ENCODE measurements at regions of chr1 and their contacts with region 1.

Region 1: GRCh38 chr1:31789259-31790065 is 25.3 kb upstream of the ADGRB2 start:
- DNase-seq: peak; percentile 99
- ATAC-seq: peak; percentile 74
- H3K4me3 Mint-ChIP-seq: peak overlapping the region; percentile 88
- H3K27ac Mint-ChIP-seq: peak overlapping the region; percentile 98
- H3K4me1 Mint-ChIP-seq: peaks cover 40% of the 10 kb centered on the region
- H3K27me3 Mint-ChIP-seq: peaks cover 4% of the 10 kb centered on the region
- CTCF ChIP-seq: no peak

Region 2: DNA sequence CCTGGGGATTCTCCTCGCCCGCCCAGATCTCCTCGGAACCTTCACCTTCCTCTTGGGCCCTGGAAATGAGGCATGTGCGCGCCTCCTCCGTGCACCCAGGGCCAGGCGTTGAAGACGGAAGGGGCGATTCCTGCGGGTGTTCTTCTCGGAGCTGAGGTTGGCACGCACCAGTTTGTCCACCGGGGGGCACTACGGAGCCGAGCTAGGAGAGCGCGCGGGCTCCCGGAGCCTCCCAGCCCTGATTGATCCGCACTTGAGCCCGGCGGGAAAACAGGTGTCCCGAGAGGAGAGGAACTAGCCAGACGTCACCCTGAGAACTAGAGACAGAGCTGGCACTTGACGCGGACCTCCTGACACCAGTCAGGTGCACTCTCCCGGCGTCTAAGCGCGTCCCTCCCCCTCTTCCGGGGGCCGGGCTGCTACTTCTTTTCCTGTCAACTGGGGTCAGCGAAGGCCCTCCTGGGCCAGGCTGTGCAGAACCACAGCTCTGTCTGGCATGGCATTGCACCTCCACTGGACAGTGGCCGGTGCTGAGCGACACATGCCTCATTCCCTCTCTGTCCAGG is 394.8 kb before region 1 on chr1:
- CTCF ChIA-PET with region 1: interaction called, 9 read pairs
- POLR2A ChIA-PET with region 1: no interaction called
- intact Hi-C with region 1: loop called (anchors 1 kb)
- DNase-seq: peak; percentile 72
- ATAC-seq: peak; percentile 98
- H3K4me3 Mint-ChIP-seq: peak overlapping the region; percentile 85
- H3K27ac Mint-ChIP-seq: no peak overlapping the region
- H3K4me1 Mint-ChIP-seq: peaks cover 14% of the 10 kb centered on the region
- H3K27me3 Mint-ChIP-seq: no peaks in the 10 kb centered on the region
- CTCF ChIP-seq: no peak

Region 3: DNA sequence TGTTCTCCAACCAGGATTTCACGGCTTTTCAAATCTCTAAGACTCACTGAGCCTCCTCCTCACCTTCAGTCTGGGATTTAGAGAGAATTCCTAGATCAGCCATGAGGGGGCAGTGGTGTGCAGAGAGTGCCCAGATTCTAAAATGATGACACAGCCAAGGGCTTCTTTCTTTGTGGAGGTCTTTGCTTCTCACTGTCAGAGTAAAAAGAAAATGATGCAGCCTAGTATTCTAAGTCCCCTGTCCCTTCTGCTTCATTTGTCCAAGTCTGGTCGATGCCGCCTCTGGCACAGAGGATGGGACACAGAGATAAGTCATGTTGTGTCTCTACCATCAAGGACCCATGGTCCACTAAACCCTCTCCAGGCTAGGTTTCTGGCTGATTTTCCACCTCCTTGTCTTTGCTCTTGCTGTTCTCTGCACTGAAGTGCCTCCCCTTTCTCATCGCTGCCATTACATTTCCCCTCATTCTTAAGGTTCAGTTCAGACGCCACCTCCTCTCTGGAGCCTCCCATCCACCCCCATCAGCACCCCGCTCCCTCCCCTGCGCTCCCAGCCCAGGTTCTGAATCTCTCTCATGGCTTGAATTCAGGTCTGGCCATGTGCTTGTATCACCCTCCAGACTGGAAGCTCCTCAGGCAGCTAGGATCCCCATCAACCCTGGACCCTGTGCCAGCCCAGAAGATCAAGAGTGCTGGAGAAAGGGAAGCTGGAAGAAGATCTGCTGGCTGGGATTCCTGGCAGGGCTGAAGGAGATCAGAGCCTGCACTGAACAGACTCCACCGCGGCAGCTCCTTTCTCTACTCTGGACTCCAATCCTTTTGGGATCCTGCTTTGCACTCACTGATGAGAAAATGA is 225.1 kb before region 1 on chr1:
- CTCF ChIA-PET with region 1: interaction called, 23 read pairs
- POLR2A ChIA-PET with region 1: interaction called, 3 read pairs
- intact Hi-C with region 1: no loop called
- DNase-seq: no peak
- ATAC-seq: peak; percentile 84
- H3K4me3 Mint-ChIP-seq: no peak overlapping the region
- H3K27ac Mint-ChIP-seq: no peak overlapping the region
- H3K4me1 Mint-ChIP-seq: no peaks in the 10 kb centered on the region
- H3K27me3 Mint-ChIP-seq: peaks cover 32% of the 10 kb centered on the region
- CTCF ChIP-seq: peak; percentile 22

Region 4: DNA sequence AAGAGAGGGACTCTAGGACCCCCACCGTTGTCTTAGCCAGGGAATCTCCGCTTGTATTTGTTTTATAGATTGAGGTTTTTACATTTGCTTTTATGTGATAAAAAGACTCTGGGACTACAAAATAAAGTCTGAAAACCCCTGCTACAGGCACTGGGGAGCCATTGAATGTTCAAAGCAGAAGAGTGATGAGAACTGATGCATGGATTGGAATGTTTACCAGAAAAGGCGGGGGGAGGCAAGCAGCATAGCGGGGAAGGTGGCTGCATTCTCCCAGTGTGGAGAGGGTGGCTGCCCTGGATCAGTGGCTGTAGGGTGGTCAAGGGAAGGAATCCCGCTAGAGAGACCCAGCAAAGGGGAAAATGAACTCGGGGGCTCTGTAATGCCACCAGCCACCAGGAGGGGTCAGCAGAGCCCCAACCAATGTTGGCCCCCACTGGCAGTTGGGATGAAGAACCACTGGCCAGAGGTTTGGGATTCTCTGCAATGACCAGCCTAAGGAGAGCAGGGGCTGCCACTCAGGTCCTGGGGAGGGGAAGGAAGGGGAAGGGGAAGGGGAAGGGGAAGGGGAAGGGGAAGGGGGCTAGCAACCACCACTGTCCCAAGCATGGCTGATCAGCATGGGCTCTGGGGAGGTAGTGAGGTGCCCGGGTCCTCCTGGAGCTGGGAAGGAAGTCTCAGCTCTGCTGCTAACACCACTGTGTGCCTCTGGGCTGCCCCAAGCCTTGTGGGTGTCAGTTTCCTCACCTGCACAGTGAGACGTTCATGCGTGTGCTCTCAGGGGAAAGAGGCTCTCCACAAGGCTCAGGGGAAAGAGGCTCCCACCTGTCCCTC is 125.6 kb before region 1 on chr1:
- CTCF ChIA-PET with region 1: interaction called, 114 read pairs
- POLR2A ChIA-PET with region 1: interaction called, 16 read pairs
- intact Hi-C with region 1: loop called (anchors 1 kb)
- DNase-seq: peak; percentile 63
- ATAC-seq: peak; percentile 81
- H3K4me3 Mint-ChIP-seq: no peak overlapping the region
- H3K27ac Mint-ChIP-seq: peak overlapping the region; percentile 46
- H3K4me1 Mint-ChIP-seq: no peaks in the 10 kb centered on the region
- H3K27me3 Mint-ChIP-seq: peaks cover 9% of the 10 kb centered on the region
- CTCF ChIP-seq: peak; percentile 31

Region 5: DNA sequence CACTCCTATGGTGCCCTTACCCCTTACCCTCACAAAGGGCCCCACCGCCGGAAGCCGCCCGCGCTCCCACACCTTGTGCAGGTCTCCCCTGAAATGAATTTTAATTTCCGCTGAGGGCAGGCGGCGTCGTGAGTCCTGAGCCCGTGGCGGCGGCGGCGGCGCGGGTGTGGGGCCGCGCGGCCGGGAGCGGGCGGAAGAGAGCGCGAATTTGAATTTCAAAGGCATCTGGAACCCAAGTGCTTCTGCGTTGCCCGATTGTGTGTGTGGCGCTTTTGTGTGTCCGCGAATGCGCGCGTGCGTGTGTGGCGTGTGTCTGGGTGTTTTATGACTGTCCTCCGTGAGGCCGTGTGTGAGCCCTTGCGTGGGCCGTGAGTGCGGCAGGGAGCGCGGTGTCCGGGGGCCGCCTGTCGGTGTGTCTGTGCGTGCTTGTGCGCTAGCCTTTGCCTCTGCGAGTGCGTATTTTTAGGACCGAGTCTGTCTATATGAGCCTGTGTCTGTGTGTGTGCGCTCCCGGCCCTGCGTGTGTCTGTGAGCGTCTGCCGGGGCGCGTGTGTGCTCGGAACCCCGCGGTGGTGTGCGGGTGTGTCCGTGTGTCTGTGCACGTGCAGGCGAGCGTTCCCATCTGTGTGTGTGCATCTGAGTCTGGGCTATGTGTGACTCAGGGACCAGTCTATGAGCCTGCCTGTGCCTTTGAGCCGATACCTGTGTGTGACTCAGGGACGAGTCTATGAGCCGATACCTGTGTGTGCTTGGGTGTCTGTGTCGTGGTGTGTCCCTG is 17.4 kb before region 1 on chr1:
- CTCF ChIA-PET with region 1: interaction called, 7 read pairs
- POLR2A ChIA-PET with region 1: interaction called, 13 read pairs
- intact Hi-C with region 1: loop called (anchors 1 kb)
- DNase-seq: no peak
- ATAC-seq: peak; percentile 55
- H3K4me3 Mint-ChIP-seq: peak overlapping the region; percentile 78
- H3K27ac Mint-ChIP-seq: peak overlapping the region; percentile 73
- H3K4me1 Mint-ChIP-seq: peaks cover 39% of the 10 kb centered on the region
- H3K27me3 Mint-ChIP-seq: peaks cover 40% of the 10 kb centered on the region
- CTCF ChIP-seq: no peak

Region 6: GRCh38 chr1:31814041-31814511 is 24.6 kb after region 1 on chr1:
- CTCF ChIA-PET with region 1: no interaction called
- POLR2A ChIA-PET with region 1: no interaction called
- intact Hi-C with region 1: no loop called
- DNase-seq: no peak
- ATAC-seq: no peak
- H3K4me3 Mint-ChIP-seq: no peak overlapping the region
- H3K27ac Mint-ChIP-seq: no peak overlapping the region
- H3K4me1 Mint-ChIP-seq: peaks cover 26% of the 10 kb centered on the region
- H3K27me3 Mint-ChIP-seq: peaks cover 3% of the 10 kb centered on the region
- CTCF ChIP-seq: no peak

Region 7: DNA sequence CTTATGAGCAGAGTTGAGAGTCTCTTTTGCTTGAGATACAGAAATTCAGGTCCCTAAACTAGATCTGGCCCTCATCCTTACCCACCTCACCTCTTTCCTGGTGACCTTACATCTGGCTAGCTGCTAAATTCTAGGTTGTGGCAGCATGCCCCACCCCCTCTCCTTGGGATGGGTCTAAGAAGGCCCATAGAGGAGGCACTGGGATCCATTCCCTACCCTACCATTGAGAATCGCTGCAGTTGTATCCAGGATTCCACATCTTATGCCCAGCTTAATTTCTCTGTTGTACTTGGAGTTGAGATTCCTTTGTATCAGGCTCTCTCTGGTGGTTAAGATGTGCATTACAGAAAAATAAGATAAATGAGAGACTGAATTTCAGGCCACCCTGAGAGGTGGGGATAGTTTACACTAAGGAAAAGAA is 273.8 kb after region 1 on chr1:
- CTCF ChIA-PET with region 1: interaction called, 8 read pairs
- POLR2A ChIA-PET with region 1: no interaction called
- intact Hi-C with region 1: loop called (anchors 1 kb)
- DNase-seq: no peak
- ATAC-seq: peak; percentile 75
- H3K4me3 Mint-ChIP-seq: no peak overlapping the region
- H3K27ac Mint-ChIP-seq: no peak overlapping the region
- H3K4me1 Mint-ChIP-seq: peaks cover 9% of the 10 kb centered on the region
- H3K27me3 Mint-ChIP-seq: no peaks in the 10 kb centered on the region
- CTCF ChIP-seq: no peak

Region 8: DNA sequence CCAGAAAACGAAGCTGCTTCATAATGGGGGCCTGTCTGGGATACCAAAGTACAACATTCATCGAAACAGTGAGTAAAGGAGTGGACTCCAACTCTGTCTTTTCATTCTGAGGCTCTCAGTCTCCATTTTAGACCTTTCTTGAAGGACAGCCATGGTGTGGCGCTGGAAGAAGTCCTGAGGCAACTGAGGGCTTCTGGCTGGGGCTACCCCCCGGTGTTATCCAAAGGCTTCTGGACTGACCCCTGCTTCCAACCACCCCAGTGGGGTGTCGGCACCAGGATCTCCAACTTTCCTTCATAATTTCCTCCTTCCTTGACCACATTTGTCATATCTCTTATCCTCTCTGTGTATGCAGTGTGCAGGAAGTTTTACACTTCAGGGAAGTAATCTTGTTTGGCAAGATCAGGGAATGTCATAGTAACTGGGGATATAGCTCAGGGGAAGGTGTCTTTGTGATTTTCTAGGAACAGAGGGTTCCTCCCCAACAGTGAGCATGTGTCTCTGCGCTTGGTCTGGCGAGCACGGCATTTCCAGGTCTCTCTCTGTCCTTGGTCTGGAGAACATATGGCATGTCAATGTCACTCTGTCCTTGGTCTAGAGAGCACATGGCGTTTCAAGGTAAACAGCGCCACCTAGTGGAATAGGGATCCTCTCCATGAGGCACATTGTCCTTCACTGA is 624.2 kb after region 1 on chr1:
- CTCF ChIA-PET with region 1: no interaction called
- POLR2A ChIA-PET with region 1: no interaction called
- intact Hi-C with region 1: loop called (anchors 1 kb)
- DNase-seq: peak; percentile 28
- ATAC-seq: peak; percentile 88
- H3K4me3 Mint-ChIP-seq: no peak overlapping the region
- H3K27ac Mint-ChIP-seq: no peak overlapping the region
- H3K4me1 Mint-ChIP-seq: peaks cover 3% of the 10 kb centered on the region
- H3K27me3 Mint-ChIP-seq: peaks cover 15% of the 10 kb centered on the region
- CTCF ChIP-seq: no peak